ENCODE measurements at regions of chr2 and their contacts with region 1.

Region 1: DNA sequence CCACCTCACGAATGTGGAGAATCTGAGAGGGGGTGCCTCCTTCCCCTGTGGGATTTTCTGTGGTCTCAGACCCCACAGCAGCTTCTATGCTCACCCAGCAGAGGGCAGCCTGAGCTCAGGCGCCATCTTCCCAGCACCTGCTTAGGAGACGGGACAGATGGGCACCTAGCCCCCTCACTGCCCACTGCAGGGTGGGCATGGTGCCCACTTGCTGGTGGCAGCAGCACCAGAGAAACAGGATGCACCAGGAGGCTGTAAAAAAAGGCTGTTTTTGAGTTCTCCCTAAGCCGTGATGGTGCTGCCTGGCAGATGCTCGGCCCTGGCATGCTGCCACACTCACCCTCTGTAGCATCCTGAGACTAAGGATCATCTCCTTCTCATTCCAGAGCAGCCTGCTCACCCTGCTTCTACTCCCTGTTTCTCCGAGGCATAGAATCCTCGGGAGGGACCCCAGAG is 19.1 kb upstream of the SLC20A1 start:
- DNase-seq: peak; percentile 59
- H3K4me3 Mint-ChIP-seq: peak overlapping the region; percentile 57
- H3K27ac Mint-ChIP-seq: peak overlapping the region; percentile 40
- H3K4me1 Mint-ChIP-seq: peaks cover 79% of the 10 kb centered on the region
- H3K27me3 Mint-ChIP-seq: peaks cover 2% of the 10 kb centered on the region

Region 2: DNA sequence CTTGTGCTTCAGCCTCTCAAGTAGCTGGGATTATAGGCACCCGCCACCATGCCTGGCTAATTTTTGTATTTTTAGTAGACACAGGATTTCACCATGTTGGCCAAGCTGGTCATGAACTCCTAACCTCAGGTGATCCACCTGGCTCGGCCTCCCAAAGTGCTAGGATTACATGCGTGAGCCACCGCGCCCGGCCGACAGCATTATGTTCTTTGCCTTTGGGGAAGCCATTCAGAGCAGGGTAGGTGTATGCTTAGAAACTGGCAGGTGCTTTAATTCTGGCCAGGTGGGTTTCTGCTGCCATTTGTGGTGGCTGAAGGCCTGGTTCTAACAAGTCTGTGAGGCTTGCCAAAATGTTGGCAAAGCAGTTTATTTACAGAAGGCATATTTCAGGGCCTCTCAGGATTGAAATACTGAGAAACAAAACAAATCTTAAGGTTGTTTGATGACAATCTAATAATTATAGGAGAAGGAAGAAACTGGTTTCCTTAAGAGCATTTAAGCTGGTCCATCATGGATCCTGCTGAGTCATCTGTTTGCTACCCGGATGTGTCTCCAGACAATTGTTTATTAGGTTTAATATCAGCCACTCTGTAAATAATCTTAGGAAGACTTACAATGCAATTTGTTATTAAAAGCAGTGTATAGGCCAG is 35.1 kb after region 1 on chr2:
- intact Hi-C with region 1: loop called (anchors 5 kb)
- DNase-seq: no peak
- H3K4me3 Mint-ChIP-seq: no peak overlapping the region
- H3K27ac Mint-ChIP-seq: no peak overlapping the region
- H3K4me1 Mint-ChIP-seq: peaks cover 68% of the 10 kb centered on the region
- H3K27me3 Mint-ChIP-seq: no peaks in the 10 kb centered on the region

Region 3: GRCh38 chr2:112692496-112692911 is 65.9 kb after region 1 on chr2:
- intact Hi-C with region 1: loop called (anchors 1 kb)
- DNase-seq: peak; percentile 73
- H3K4me3 Mint-ChIP-seq: peak overlapping the region; percentile 47
- H3K27ac Mint-ChIP-seq: peak overlapping the region; percentile 89
- H3K4me1 Mint-ChIP-seq: peaks cover 32% of the 10 kb centered on the region
- H3K27me3 Mint-ChIP-seq: no peaks in the 10 kb centered on the region

Region 4: DNA sequence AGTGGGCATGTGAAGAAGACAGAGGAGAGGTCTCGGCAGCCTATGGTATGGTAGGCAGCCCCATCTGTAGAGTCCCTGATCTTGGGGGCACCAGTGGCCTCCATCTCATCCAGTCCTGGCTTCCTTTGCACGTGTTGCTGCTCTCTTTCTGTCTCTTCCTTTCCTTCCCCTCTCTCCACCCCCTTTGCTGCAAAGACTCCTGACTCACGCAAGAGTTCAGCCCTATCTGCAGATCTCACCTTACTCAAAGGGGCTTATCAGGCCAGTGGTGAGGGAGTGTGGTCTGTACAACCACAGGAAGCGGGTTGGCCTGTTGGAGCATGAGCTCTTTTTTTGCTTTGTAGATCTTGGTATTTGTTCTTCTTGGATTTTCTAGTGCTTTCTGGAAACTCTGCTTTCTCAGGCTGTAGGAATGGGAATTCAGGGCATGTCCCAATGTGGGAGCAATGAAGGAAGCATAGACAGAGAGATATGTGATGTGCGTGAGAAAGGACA is 79.6 kb after region 1 on chr2:
- intact Hi-C with region 1: loop called (anchors 1 kb)
- DNase-seq: peak; percentile 79
- H3K4me3 Mint-ChIP-seq: peak overlapping the region; percentile 79
- H3K27ac Mint-ChIP-seq: peak overlapping the region; percentile 93
- H3K4me1 Mint-ChIP-seq: peaks cover 72% of the 10 kb centered on the region
- H3K27me3 Mint-ChIP-seq: no peaks in the 10 kb centered on the region

Region 5: GRCh38 chr2:112726497-112727190 is 100.0 kb after region 1 on chr2:
- intact Hi-C with region 1: loop called (anchors 1 kb)
- DNase-seq: peak; percentile 86
- H3K4me3 Mint-ChIP-seq: no peak overlapping the region
- H3K27ac Mint-ChIP-seq: no peak overlapping the region
- H3K4me1 Mint-ChIP-seq: peaks cover 16% of the 10 kb centered on the region
- H3K27me3 Mint-ChIP-seq: no peaks in the 10 kb centered on the region